Activated CD4-positive, alpha-beta T cell treated with anti-CD3 and anti-CD28 coated beads, Interleukin-2, amount 10 ng/mL, durations not matched to agents 24 days and 14 days (primary cell): ENCODE measurements at regions of chr15 and their contacts with region 1.

Region 1: GRCh38 chr15:58770857-58771620 is at the start of gene MINDY2:
- DNase-seq: peak; percentile 98
- H3K4me3 Mint-ChIP-seq: no peak within 1 kb of the TSS
- H3K27ac Mint-ChIP-seq: peak within 1 kb of the TSS; percentile 93
- H3K4me1 Mint-ChIP-seq: peaks cover 16% of the 10 kb centered on the region
- H3K27me3 Mint-ChIP-seq: peaks cover 2% of the 10 kb centered on the region
- total RNA-seq, gene MINDY2: 10.1 and 10.9 TPM in 2 replicates

Region 2: DNA sequence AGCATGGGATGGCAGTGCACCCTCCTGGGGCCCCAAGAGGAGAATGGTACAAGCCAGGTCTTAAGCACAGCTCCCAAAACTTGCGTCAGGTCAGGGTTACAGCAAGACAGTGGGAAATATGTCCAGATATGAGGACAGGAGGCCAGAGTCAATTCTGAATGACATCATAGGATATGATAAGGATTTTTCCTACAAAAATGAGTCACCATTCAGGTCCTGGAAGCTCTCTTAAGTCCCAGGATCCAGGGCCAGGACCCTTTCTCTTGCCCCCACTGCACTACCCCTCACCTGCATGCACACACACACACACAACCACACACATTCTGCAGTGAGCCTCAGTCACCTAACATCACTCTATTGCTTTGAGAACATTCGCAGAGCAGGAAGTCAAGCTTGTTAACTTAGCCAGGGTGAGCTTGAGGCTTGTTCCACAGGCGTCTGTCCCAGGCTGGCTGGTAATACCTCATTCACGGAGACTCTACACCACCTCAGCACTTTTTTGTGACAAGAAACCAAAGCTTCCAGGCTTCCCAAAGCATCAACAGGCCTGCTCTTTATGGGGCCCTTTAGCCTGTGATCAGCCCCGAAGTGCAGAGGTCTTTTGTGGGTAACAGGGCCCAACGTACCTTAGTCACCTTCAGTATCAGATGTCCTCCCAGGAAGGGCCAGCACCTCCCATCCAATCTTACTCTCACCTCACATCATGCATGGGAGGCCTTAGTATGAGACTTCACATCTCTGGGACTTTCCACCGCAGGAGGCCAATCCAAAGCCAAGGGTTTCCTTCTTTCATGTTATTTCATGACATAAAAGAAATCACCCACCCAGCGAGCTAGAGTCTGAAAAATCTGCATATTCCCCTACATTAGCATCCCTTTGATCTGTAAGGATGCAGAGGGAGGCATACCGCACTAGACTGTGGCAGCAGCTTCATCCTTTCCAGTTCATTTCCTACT is 413.2 kb before region 1 on chr15:
- intact Hi-C with region 1: loop called (anchors 5 kb)
- DNase-seq: peak; percentile 83
- H3K4me3 Mint-ChIP-seq: peak overlapping the region; percentile 16
- H3K27ac Mint-ChIP-seq: peak overlapping the region; percentile 87
- H3K4me1 Mint-ChIP-seq: peaks cover 45% of the 10 kb centered on the region
- H3K27me3 Mint-ChIP-seq: no peaks in the 10 kb centered on the region

Region 3: GRCh38 chr15:58880320-58880719 is 109.3 kb after region 1 on chr15:
- intact Hi-C with region 1: no loop called
- DNase-seq: peak; percentile 46
- H3K4me3 Mint-ChIP-seq: no peak overlapping the region
- H3K27ac Mint-ChIP-seq: no peak overlapping the region
- H3K4me1 Mint-ChIP-seq: peaks cover 4% of the 10 kb centered on the region
- H3K27me3 Mint-ChIP-seq: no peaks in the 10 kb centered on the region